ENCODE measurements at regions of chr3 and their contacts with region 1.

Region 1: GRCh38 chr3:31250116-31250777 is 282.5 kb upstream of the STT3B start:
- DNase-seq: no peak
- H3K4me3 Mint-ChIP-seq: no peak overlapping the region
- H3K27ac Mint-ChIP-seq: peak overlapping the region; percentile 5
- H3K4me1 Mint-ChIP-seq: peaks cover 57% of the 10 kb centered on the region
- H3K27me3 Mint-ChIP-seq: peaks cover under 1% of the 10 kb centered on the region

Region 2: GRCh38 chr3:31077021-31077601 is 173.1 kb before region 1 on chr3:
- intact Hi-C with region 1: loop called (anchors 1 kb)
- DNase-seq: peak; percentile 18
- H3K4me3 Mint-ChIP-seq: no peak overlapping the region
- H3K27ac Mint-ChIP-seq: peak overlapping the region; percentile 52
- H3K4me1 Mint-ChIP-seq: peaks cover 34% of the 10 kb centered on the region
- H3K27me3 Mint-ChIP-seq: peaks cover 7% of the 10 kb centered on the region

Region 3: DNA sequence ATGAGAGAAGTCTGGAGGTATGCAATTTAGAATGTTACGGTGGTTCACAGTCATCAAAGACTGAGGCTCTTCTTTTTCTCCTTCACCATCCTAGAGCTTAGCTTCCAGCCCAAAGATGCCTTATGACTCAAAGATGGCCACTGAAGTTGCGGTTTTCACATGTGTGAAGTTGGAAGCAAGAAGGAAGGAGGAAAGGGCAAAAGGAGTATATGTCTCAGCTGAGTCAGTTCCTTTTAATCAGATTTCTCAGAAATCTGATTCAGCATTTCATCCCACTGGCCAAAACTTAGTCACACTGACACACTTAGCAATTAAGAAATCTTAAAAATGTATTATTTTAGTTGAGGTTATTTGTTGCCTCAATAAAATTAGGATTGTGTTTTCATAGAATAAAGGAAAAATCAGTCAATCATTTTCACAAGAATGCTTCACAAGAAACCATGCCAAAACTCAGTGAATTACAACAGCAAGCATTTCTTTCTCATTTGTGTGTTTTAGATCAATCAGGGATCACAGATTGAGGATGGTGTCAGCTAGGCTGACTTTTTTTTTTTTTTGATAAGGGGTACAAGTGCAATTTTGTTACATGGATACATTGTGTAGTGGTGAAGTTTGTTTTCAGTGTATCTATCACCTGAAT is 144.7 kb before region 1 on chr3:
- intact Hi-C with region 1: loop called (anchors 1 kb)
- DNase-seq: no peak
- H3K4me3 Mint-ChIP-seq: no peak overlapping the region
- H3K27ac Mint-ChIP-seq: no peak overlapping the region
- H3K4me1 Mint-ChIP-seq: peaks cover 42% of the 10 kb centered on the region
- H3K27me3 Mint-ChIP-seq: peaks cover 5% of the 10 kb centered on the region

Region 4: DNA sequence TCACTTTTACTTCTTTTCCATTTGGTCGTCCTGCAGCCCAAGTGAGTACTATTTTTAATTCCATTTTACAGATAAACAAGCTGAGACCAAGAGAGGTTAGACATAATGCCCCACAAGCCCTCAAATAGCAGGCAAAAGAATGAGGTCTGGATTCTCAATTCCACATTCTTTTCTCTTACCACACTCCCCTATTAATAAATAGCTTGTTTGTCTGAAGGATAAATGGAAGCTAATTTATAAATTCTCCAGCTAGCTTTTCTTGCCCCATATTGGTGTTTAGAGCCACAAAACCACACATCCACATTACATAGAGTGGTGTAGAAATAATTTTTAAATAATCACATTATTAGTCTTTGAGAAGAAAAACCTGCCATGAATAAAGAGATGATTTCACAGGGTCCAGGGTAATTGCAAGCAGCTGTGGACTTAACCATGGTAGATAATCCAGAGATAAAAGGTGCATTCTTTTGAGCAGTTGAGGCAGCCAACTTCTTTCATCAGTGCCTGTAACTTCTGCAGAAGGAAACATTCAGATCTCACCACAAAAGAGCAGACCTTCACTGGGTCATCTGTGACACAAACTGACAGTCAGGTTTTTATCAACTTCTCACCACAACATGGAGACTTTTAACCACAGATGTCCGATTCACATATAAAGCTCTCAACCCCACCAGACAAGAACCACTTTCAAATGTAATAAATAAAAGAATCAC is 31.0 kb before region 1 on chr3:
- intact Hi-C with region 1: loop called (anchors 1 kb)
- DNase-seq: no peak
- H3K4me3 Mint-ChIP-seq: no peak overlapping the region
- H3K27ac Mint-ChIP-seq: peak overlapping the region; percentile 19
- H3K4me1 Mint-ChIP-seq: peaks cover 78% of the 10 kb centered on the region
- H3K27me3 Mint-ChIP-seq: no peaks in the 10 kb centered on the region

Region 5: DNA sequence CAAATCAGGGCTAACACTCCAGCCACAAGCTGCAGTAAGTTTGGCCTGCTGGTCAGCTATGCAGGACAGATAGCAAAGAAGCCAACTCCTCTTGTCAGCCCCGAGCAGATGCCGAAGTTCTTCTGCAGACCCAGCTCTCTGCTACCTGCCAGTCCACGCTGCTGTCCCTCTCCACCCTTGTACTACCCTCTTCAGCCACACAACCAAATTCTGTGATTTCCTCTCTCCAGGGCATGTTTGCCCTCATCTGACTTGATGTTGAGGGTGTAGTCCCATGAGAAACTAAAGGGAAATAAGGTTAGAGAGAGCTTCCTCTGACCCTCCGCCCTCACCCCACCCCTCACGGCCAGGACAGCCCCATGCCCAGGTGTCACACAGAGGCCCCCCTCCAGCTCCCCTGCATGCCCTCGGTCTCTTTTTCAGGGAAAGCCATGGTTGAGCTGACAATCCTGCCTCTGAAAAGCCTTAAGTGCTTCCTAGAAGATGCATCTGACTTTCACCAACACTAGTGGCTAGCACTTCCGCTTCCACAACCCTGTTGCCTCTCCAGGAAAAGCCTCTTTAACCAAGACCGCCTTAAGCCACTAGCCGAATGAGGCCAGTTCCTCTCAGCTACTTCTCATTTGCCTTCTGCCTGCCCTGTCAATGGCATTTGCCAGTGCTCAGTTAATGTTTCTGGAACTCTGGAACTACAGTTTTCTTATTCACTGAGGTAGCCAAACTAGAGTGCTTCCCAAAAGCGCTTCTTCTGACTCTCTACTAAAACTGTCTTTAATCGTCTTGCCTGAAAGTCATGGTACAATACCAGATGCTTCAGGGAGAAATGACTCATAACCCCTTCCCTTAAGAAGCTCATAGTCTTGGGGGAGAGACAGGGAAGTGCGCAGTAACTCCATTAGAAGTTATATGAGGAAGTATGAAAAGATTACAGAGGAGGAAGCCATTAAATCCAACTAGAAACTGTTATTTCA is 17.9 kb before region 1 on chr3:
- intact Hi-C with region 1: loop called (anchors 1 kb)
- DNase-seq: no peak
- H3K4me3 Mint-ChIP-seq: no peak overlapping the region
- H3K27ac Mint-ChIP-seq: no peak overlapping the region
- H3K4me1 Mint-ChIP-seq: peaks cover 53% of the 10 kb centered on the region
- H3K27me3 Mint-ChIP-seq: peaks cover 8% of the 10 kb centered on the region

Region 6: DNA sequence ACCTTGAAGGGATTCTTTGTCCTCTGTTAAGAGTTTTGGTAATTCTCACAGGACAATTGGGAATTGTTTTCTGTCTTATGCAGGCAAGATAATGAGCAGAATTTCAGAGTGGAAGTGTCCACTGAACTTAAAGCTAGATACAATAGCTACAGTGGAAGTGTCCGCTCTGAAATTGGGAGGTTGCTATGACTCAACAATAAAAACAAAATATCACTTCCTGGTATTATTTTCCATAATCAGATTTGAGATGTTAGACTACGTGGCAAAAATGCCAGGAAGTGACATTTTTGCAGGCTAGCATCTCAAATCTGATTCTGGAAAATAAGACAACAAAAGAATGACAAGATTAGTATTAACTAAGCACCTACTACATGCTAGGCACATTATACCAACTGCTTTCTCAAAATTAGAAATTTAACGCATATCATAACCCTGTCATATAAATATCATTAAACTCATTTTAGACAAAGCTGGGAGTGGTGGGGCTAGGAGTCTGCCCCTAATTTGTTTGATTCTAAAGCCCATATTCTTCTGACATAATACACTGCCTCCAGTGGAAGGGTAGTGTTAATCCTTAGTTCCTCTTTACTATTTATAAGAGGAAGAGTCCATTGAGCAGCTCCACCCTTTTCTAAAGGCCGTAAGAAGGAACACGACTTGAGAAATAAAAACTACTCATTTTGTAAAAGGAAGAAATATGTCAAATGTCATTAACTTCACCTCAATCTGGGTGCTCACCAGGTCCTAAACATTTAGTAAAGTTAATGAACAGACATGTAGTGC is 15.6 kb after region 1 on chr3:
- intact Hi-C with region 1: no loop called
- DNase-seq: no peak
- H3K4me3 Mint-ChIP-seq: no peak overlapping the region
- H3K27ac Mint-ChIP-seq: no peak overlapping the region
- H3K4me1 Mint-ChIP-seq: peaks cover 4% of the 10 kb centered on the region
- H3K27me3 Mint-ChIP-seq: no peaks in the 10 kb centered on the region

Region 7: GRCh38 chr3:31288641-31289100 is 38.4 kb after region 1 on chr3:
- intact Hi-C with region 1: loop called (anchors 2 kb)
- DNase-seq: peak; percentile 37
- H3K4me3 Mint-ChIP-seq: peak overlapping the region; percentile 37
- H3K27ac Mint-ChIP-seq: peak overlapping the region; percentile 43
- H3K4me1 Mint-ChIP-seq: peaks cover 38% of the 10 kb centered on the region
- H3K27me3 Mint-ChIP-seq: no peaks in the 10 kb centered on the region

Region 8: DNA sequence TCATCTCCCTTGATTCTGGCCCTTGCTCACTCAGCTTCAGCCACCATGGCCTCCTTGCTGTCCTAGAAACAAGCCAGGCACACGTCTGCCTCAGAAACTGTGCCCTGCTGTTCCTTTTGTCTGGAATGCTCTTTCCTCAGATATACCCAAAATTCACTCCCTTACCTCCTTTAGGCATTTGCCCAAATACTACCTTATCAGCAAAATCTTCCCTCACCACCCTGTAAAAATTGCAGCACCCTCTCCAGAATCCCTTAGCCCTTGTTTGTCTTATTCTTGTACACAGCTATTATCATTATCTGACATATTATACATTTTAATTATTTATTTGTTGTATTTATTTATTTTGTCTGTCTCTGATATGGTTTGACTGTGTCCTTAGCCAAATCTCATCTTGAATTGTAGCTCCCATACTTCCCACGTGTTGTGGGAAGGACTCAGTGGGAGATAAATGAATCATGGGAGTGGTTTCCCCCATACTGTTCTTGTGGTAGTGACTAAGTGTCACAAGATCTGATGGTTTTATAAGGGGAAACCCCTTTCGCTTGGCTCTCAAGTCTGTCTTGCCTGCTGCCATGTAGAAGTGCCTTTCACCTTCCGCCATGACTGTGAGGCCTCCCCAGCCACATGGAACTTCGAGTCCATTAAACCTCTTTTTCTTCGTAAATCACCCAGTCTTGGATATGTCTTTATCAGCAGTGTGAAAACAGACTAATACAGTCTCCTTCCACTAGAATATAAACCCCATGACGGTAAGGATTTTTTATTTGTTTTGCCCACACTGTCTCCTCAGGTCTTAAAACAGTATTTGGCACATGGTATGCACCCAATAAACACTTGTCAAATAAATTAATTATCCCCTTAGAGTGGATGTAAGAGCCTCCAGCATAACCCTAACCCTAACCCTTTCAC is 222.5 kb after region 1 on chr3:
- intact Hi-C with region 1: loop called (anchors 10 kb)
- DNase-seq: no peak
- H3K4me3 Mint-ChIP-seq: no peak overlapping the region
- H3K27ac Mint-ChIP-seq: no peak overlapping the region
- H3K4me1 Mint-ChIP-seq: peaks cover 14% of the 10 kb centered on the region
- H3K27me3 Mint-ChIP-seq: peaks cover 27% of the 10 kb centered on the region